AG04449 (cell line): ENCODE measurements at regions of chr10 and their contacts with region 1.

Region 1: DNA sequence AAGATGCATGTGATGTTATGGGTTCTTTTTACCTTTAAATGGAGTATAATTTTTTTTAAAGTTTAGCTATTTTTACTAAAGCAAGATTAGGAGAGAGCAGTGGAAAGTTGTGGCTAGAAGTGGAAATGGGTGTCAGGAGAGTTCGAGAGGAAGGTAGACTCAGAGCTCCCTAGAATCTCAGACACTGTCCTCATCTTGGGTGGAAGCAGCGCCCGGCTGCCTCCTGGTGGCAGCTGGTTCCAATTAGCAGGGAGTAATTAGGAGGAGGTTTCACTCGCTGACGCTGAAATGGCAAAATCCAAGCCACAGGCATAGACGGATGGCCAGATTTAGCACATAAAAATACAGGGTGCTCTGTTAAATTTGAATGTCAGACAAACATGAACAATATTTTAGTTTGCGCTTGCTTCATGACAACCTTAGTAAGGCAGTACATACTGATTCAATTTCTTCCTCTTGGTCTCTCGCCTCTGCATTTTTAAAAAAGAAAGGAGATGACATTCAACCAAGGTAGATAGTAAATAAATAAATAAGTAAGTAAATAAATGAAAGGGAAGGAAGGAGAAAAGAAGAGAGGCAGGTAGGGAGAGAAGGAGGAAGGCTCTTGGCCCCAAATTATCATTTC is 58.5 kb downstream of the LGI1 start:
- DNase-seq: no peak
- H3K4me3 ChIP-seq: no peak overlapping the region
- CTCF ChIP-seq: peak; percentile 78

Region 2: DNA sequence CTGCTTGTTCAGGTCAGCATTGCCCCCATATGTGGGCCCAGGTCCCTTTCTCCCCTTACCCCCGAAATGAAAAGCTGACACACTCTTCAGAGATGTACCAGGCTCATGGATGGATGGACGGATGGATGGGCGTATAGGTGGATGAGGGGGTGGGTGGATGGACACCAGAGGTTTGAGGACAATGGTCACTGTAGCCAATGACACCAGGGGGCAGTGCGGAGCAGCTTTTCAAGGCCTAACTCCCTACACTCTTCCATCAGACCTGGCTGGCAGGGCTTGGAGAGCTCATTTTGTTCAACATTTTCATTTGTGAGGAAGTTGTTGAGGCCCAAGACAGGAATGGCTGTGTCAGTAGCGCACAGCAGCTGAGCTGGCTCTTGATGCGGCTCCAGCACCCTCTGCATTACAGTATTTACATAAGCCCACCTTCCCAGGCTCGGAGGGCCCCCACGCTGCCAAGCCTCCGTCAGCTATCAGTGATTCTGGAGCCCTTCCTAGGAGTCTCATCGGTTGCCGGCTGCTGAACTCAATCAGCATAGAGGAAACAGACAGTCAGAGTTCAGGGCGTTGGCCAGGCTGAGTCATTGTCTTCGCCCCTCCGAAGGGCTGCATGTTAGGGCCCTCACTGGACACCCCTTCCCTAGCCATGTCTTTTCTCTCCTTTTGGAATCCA is 261.3 kb before region 1 on chr10:
- CTCF ChIA-PET with region 1: interaction called, 48 read pairs
- POLR2A ChIA-PET with region 1: no interaction called
- DNase-seq: no peak
- H3K4me3 ChIP-seq: no peak overlapping the region
- CTCF ChIP-seq: peak; percentile 80

Region 3: DNA sequence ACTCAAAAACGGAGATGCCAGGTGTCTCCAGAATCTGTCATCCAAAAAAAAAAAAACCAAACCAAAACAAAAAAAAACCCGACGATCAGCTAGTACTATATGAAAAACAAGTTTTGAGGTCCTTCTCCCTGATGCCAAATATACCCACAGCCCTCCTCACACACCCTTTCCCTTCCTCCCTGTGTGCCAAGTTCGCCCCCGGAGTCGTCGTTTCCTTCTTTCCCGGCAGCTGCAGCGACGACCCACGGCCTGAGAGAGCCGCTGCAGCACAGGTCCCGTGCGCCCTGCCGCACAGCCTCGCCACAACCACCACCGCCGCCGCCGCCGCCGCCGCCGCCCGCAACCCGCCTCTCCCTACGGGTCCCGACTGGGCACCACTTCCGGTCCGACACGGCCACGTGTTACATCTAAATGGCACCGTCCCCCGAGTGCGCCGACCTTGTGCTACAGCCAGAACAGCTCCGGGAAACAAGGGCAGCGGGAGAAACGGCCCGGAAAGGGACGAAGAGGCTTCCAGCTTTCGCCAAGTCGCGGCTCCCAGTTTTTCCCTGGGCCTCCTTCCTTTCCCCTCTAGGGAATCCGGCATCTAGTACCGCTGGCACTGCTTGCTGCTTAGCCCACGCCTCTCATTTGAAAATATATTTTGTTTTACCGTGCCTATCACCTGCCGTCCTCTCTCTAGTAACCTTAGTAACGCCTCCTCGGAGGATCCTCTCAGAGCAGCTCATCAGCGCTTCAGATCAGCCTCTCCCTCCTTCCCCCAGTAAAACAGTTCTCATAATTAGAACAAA is 113.8 kb before region 1 on chr10 and contains the start of gene FRA10AC1:
- CTCF ChIA-PET with region 1: interaction called, 81 read pairs
- POLR2A ChIA-PET with region 1: no interaction called
- DNase-seq: peak; percentile 65
- H3K4me3 ChIP-seq: peak within 1 kb of the TSS; percentile 86
- CTCF ChIP-seq: peak; percentile 65

Region 4: GRCh38 chr10:93784059-93784458 is 32.2 kb before region 1 on chr10:
- CTCF ChIA-PET with region 1: interaction called, 13 read pairs
- POLR2A ChIA-PET with region 1: no interaction called
- DNase-seq: no peak
- H3K4me3 ChIP-seq: no peak overlapping the region
- CTCF ChIP-seq: no peak

Region 5: GRCh38 chr10:93859049-93859655 is 42.9 kb after region 1 on chr10:
- CTCF ChIA-PET with region 1: interaction called, 38 read pairs
- POLR2A ChIA-PET with region 1: no interaction called
- DNase-seq: no peak
- H3K4me3 ChIP-seq: no peak overlapping the region
- CTCF ChIP-seq: no peak